ENCODE measurements at regions of chr4 and their contacts with region 1.

Region 1: DNA sequence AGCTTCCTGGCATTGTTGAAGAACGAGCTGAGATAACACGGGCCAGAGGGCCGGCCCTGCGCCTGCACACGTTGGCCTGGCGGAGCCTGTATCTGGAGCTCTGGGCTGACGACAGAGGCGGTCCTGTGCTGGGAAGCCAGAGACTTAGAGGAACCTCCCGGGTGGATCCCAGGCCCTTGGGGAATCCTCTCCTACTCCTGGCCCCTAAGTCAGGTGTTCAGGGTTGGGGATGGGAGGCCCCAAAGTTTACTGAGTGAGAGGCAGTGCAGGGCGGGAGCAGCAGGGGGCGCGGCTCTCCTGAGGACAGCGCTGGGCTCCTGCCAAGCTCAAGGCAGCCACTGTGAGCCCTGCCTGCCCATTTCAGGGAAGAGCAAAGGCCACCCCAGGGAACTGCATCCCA is 2.5 kb upstream of the HTRA3 start:
- DNase-seq: peak; percentile 44 to 78
- H3K4me3 ChIP-seq: no peak overlapping the region
- H3K27ac ChIP-seq: no peak overlapping the region
- H3K4me1 ChIP-seq: no peaks in the 10 kb centered on the region
- H3K27me3 ChIP-seq: peaks cover 23% of the 10 kb centered on the region
- CTCF ChIP-seq: peak; percentile 81

Region 2: DNA sequence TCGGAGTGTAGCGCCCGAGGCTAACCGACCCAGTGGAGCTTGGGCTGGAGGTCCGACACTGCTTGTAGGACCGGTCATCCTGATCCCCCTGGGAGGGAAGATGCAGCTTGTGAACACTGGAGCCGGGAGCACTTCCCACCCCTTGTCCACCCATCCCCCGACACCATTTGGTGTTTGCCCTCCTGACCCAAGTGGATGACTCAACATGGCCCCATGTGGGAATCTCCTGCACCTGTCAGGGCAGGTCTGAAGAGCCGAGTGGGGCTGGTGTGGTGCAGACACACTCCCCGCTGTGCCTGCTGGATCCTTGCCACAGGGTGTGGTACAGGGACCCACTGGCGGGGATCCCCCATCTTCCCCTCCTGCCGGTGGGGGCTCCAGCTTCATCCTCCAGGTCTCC is 237.4 kb before region 1 on chr4:
- CTCF ChIA-PET with region 1: no interaction called
- POLR2A ChIA-PET with region 1: no interaction called
- intact Hi-C with region 1: no loop called
- DNase-seq: peak; percentile 36 to 50
- H3K4me3 ChIP-seq: no peak overlapping the region
- H3K27ac ChIP-seq: no peak overlapping the region
- H3K4me1 ChIP-seq: no peaks in the 10 kb centered on the region
- H3K27me3 ChIP-seq: no peaks in the 10 kb centered on the region
- CTCF ChIP-seq: no peak

Region 3: DNA sequence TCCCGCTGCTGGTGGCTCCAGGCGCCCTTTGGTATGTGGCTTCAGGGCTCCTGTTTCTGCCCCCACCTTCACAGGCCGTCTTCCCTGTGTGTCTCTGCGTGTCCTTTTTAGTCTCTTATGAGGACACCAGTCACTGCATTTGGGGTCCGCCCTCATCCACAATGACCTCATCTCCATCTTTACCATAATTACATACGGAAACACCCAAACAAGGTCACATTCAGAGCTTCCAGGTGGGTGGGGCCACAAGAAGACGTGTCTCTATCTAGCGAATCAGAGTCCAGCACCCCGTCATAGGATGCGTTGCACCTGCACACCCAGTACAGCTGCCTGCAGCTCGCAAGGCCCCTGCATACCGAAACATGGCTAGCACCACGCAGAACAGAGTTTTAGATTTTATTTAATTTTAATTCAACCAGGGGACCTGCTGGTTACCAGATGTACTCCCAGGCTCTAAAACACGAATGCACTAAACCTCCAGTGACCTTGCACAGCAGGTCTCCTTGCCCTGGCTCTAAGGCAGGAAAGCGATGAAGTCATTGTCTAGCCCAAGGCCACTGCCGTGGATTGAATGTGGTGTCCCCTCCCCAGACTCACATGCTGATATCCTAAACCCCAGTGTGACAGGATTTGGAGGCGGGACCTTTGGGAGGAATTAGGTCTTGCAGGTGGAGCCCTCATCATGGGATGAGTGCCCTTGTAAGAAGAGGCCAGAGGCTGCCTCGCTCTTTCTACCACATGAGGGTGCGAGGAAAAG is 138.8 kb before region 1 on chr4:
- CTCF ChIA-PET with region 1: no interaction called
- POLR2A ChIA-PET with region 1: no interaction called
- intact Hi-C with region 1: no loop called
- DNase-seq: no peak
- H3K4me3 ChIP-seq: no peak overlapping the region
- H3K27ac ChIP-seq: no peak overlapping the region
- H3K4me1 ChIP-seq: no peaks in the 10 kb centered on the region
- H3K27me3 ChIP-seq: peaks cover 25% of the 10 kb centered on the region; the same call in 1 of the 2 replicates
- CTCF ChIP-seq: no peak

Region 4: GRCh38 chr4:8176547-8177399 is 90.3 kb before region 1 on chr4:
- CTCF ChIA-PET with region 1: interaction called, 4 read pairs
- POLR2A ChIA-PET with region 1: no interaction called
- intact Hi-C with region 1: loop called (anchors 1 kb)
- DNase-seq: peak in 1 of 2 experiments; percentile 48
- H3K4me3 ChIP-seq: no peak overlapping the region
- H3K27ac ChIP-seq: no peak overlapping the region
- H3K4me1 ChIP-seq: peaks cover 21% of the 10 kb centered on the region
- H3K27me3 ChIP-seq: no peaks in the 10 kb centered on the region
- CTCF ChIP-seq: peak; percentile 75

Region 5: DNA sequence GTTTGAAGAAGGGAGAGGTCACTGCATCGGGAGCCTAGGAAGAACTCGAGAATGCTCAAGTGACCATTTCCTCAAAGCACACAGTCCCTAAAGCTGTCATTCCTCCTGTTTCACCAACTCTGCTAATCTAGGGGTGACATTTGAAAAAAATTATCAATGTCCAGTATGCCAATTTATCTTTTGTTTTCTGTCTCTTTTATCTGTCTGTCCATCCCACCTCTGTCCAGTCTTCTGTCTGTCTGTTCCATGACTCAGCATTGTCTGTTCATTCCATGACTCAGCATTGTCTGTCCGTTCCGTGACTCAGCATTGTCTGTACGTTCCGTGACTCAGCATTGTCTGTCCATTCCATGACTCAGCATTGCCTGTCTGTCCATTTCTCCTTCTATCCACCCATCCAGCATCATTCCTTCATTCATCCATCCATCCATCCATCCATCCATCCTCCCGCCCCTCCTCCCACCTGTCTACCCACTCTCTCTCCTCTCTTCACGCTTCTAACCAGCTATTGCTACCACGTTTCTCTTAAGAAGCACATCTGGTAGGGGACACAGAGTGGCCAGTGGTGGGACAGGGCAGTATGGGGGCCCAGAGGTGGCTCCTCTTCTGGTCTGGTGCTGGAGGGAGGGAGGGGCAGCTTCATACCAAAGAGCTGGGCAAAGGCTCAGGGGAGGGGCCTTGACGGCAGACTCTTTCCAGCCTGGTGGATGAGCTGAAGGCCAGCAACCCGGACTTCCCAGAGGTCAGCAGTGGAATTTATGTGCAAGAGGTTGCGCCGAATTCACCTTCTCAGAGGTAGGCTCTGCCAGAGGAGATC is 36.6 kb after region 1 on chr4:
- CTCF ChIA-PET with region 1: interaction called, 14 read pairs
- POLR2A ChIA-PET with region 1: no interaction called
- intact Hi-C with region 1: no loop called
- DNase-seq: peak in 1 of 2 experiments; percentile 28
- H3K4me3 ChIP-seq: no peak overlapping the region
- H3K27ac ChIP-seq: peak overlapping the region; percentile 51; the same call in 1 of the 2 replicates
- H3K4me1 ChIP-seq: peaks cover 14% of the 10 kb centered on the region
- H3K27me3 ChIP-seq: no peaks in the 10 kb centered on the region
- CTCF ChIP-seq: no peak

Region 6: DNA sequence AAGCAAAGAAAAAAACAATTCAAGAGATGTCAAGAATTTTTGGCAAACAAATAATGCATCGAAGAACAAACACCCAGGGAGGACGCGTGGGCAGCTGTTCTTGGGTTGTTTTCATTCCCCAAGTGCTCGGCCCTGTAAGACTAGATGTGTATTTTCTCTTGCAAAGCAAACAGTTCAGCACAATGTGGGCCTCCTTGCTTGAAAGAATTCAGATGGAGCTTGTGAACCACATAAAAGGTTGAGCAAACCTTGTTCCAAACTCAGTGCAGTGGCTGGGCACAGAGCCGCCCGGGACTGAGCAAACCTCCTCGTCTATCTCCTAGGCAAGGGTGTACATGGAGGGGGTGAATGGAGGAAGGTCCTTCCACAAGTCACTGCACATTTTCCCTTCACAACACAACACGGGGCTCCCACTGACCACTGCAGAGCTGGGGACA is 84.9 kb after region 1 on chr4:
- CTCF ChIA-PET with region 1: no interaction called
- POLR2A ChIA-PET with region 1: no interaction called
- intact Hi-C with region 1: loop called (anchors 5 kb)
- DNase-seq: no peak
- H3K4me3 ChIP-seq: no peak overlapping the region
- H3K27ac ChIP-seq: no peak overlapping the region
- H3K4me1 ChIP-seq: peaks cover 38% of the 10 kb centered on the region
- H3K27me3 ChIP-seq: no peaks in the 10 kb centered on the region
- CTCF ChIP-seq: no peak

Region 7: DNA sequence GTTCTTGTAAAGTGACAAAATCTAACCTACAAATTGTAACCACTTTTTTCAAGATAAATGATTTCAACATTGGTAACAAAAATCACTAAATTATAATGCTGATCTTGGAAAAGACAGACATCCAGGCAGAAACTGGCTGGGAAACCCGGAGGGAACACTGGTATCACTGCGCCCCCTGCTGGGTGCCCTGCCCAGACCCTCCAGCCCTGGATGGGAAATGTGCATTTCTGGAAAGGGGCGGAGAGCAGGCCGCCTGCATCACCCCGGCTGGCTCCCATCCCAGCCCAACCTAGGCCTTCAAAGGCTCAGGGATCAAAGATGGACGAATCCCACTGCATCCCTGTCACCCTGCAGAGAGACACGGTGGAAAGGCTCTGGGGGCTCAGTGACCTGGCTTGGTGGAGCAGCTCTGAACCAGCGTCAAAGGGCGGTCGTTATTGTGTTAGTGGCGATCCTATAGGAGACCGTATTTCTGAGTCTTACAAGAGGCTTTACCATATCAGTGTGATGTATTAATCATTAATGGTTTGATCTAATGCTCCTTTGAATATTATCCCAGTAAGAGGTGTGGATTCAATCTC is 136.2 kb after region 1 on chr4:
- CTCF ChIA-PET with region 1: interaction called, 8 read pairs
- POLR2A ChIA-PET with region 1: interaction called, 6 read pairs
- intact Hi-C with region 1: loop called (anchors 1 kb)
- DNase-seq: peak in 1 of 2 experiments; percentile 82
- H3K4me3 ChIP-seq: no peak overlapping the region
- H3K27ac ChIP-seq: no peak overlapping the region
- H3K4me1 ChIP-seq: no peaks in the 10 kb centered on the region
- H3K27me3 ChIP-seq: no peaks in the 10 kb centered on the region
- CTCF ChIP-seq: peak; percentile 91

Measured in PC-9 (cell line).